ENCODE measurements at regions of chr6 and their contacts with region 1.

Region 1: DNA sequence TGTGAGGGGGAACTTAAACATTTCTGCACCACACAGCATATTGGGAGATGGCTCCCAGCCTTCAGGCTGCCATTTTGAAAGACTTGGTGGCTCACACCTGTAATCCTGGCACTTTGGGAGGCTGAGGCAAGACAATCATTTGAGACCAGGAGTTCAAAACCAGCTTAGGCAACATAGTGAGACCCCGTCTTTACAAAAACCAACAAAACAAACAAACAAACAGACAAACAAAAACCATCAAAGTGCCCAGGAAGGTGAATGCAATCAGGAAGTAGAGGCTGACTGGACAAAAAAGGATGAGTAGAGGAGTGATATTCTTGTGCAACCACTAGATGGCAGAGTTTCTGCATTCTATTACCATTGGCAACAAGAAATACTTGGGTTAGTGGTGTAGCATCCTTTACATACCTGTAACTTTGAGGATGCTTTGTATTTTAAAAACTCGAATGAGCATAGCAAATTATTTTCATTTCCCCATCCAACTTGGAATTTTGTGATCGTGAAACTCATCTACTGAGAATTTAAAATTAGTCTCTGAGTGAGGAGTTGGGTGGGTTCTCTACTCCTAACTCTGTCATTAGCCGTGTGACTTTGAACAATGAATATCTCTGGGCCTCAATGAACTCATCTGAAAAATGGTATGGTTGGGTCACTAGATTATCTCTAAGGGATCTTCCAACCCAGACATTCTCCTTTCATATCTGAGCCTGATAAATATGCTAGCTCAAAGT is 84.4 kb downstream of the CRYBG1 start:
- DNase-seq: peak; percentile 17
- ATAC-seq: peak; percentile 81
- H3K4me3 Mint-ChIP-seq: no peak overlapping the region
- H3K27ac Mint-ChIP-seq: no peak overlapping the region
- H3K4me1 Mint-ChIP-seq: peaks cover 12% of the 10 kb centered on the region
- H3K27me3 Mint-ChIP-seq: peaks cover 18% of the 10 kb centered on the region
- CTCF ChIP-seq: peak; percentile 81

Region 2: DNA sequence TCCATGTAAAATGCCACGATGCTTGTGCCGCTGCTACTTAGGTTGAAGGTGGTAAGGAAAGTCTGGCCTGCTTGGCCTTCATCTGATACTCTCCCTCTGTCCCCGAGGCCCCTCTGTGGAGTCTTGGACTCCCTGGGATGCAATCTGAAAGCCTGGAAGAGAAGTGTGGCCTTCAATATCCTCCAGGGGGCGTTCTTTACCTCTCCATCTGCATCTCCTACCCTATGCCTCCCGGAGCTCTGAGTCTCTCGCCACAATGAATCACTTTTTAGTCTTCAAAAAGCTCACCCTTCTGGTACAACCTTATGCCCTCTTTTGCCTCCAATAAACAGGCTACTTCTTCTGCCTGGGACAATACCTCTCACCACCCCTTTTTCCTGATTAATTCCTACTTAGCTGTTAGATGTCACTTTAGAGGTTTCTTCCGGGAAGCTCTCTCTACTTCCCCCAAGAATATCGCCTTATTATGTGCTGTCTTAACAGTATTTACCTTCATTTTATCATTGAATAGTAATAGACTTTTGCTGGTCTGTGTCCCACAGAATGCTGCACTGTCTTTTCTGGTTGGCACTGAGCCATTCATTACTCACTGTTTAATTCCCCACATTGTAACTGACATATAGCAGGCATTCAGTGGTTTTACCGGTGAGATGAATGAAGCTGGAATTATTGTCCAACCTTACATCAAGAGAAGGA is 105.5 kb before region 1 on chr6:
- CTCF ChIA-PET with region 1: interaction called, 57 read pairs
- POLR2A ChIA-PET with region 1: no interaction called
- intact Hi-C with region 1: loop called (anchors 2 kb)
- DNase-seq: peak; percentile 71
- ATAC-seq: peak; percentile 95
- H3K4me3 Mint-ChIP-seq: no peak overlapping the region
- H3K27ac Mint-ChIP-seq: no peak overlapping the region
- H3K4me1 Mint-ChIP-seq: no peaks in the 10 kb centered on the region
- H3K27me3 Mint-ChIP-seq: peaks cover 24% of the 10 kb centered on the region
- CTCF ChIP-seq: peak; percentile 77

Region 3: DNA sequence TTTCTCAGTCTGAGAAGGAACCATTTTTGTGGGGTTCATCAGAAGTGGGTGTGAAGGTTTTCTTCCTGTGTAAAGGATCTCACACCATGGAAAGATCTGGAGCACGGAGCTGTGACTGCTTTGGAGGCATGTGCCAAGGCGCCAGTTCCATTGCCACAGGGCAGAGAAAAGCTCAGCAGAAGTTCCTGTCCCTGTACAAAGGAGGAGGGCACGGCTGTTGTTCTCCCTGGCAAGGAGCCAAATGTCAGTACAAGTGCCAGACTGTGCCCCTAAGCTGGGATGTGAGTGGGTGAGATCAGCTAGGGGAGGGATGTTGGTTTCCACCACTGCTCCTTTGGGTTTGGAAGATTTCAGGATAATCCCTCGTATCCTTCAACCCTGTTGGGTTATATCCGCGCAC is 32.8 kb after region 1 on chr6:
- CTCF ChIA-PET with region 1: interaction called, 17 read pairs
- POLR2A ChIA-PET with region 1: no interaction called
- intact Hi-C with region 1: no loop called
- DNase-seq: no peak
- ATAC-seq: no peak
- H3K4me3 Mint-ChIP-seq: no peak overlapping the region
- H3K27ac Mint-ChIP-seq: no peak overlapping the region
- H3K4me1 Mint-ChIP-seq: peaks cover 7% of the 10 kb centered on the region
- H3K27me3 Mint-ChIP-seq: peaks cover 2% of the 10 kb centered on the region
- CTCF ChIP-seq: no peak

Region 4: GRCh38 chr6:106556368-106556960 is 111.5 kb after region 1 on chr6:
- CTCF ChIA-PET with region 1: interaction called, 423 read pairs
- POLR2A ChIA-PET with region 1: no interaction called
- intact Hi-C with region 1: no loop called
- DNase-seq: no peak
- ATAC-seq: no peak
- H3K4me3 Mint-ChIP-seq: no peak overlapping the region
- H3K27ac Mint-ChIP-seq: no peak overlapping the region
- H3K4me1 Mint-ChIP-seq: peaks cover 26% of the 10 kb centered on the region
- H3K27me3 Mint-ChIP-seq: no peaks in the 10 kb centered on the region
- CTCF ChIP-seq: peak; percentile 60

Region 5: DNA sequence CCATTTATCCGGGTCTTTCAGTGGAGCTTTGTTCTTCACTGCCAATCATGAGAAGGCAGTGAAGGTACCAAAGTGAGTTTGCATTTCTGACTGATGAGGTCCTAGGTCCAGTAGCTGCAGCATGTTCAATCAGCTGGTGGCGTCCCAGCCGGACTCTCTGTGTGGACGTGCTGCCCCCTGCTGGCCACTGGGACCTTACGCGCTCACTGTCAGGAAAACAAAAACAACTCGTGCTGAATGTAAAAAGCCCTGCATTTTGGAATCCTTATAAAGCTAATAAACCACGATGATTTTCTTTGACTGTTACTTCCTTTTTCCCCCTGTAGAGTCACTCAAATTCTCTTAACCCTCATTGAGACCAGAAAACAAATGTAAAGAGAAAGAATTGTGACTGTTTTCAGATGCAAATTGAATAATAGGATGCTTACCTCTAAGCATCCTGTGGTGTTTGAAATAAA is 534.5 kb after region 1 on chr6:
- CTCF ChIA-PET with region 1: interaction called, 37 read pairs
- POLR2A ChIA-PET with region 1: no interaction called
- intact Hi-C with region 1: loop called (anchors 2 kb)
- DNase-seq: peak; percentile 89
- ATAC-seq: peak; percentile 71
- H3K4me3 Mint-ChIP-seq: no peak overlapping the region
- H3K27ac Mint-ChIP-seq: no peak overlapping the region
- H3K4me1 Mint-ChIP-seq: no peaks in the 10 kb centered on the region
- H3K27me3 Mint-ChIP-seq: peaks cover 29% of the 10 kb centered on the region
- CTCF ChIP-seq: peak; percentile 96